Natural killer cell (primary cell): ENCODE measurements at regions of chr17 and their contacts with region 1.

Region 1: GRCh38 chr17:73231841-73232586 is 29.7 kb downstream of the CPSF4L start:
- DNase-seq: peak; percentile 97 to 98
- ATAC-seq: peak; percentile 96 to 98 (median 97)
- H3K4me3 ChIP-seq: peak overlapping the region; percentile 84
- H3K4me3 Mint-ChIP-seq: peak overlapping the region; percentile 98
- H3K27ac ChIP-seq: peak overlapping the region; percentile 48
- H3K27ac Mint-ChIP-seq: peak overlapping the region; percentile 94
- H3K4me1 ChIP-seq: peaks cover 21% of the 10 kb centered on the region
- H3K4me1 Mint-ChIP-seq: peaks cover 60 to 61% of the 10 kb centered on the region in 2 donors
- H3K27me3 ChIP-seq: no peaks in the 10 kb centered on the region
- H3K27me3 Mint-ChIP-seq: no peaks in the 10 kb centered on the region
- CTCF ChIP-seq: no peak

Region 2: GRCh38 chr17:73096866-73097265 is 135.1 kb before region 1 on chr17:
- intact Hi-C with region 1: loop called (anchors 5 kb)
- DNase-seq: no peak
- ATAC-seq: no peak
- H3K4me3 ChIP-seq: no peak overlapping the region
- H3K4me3 Mint-ChIP-seq: peak overlapping the region; percentile 59
- H3K27ac ChIP-seq: no peak overlapping the region
- H3K27ac Mint-ChIP-seq: peak overlapping the region in 1 of 2 donors; percentile 60
- H3K4me1 ChIP-seq: peaks cover 32% of the 10 kb centered on the region
- H3K4me1 Mint-ChIP-seq: peaks cover 14 to 38% of the 10 kb centered on the region in 2 donors
- H3K27me3 ChIP-seq: no peaks in the 10 kb centered on the region
- H3K27me3 Mint-ChIP-seq: peaks cover 21 to 22% of the 10 kb centered on the region in 2 donors
- CTCF ChIP-seq: no peak

Region 3: DNA sequence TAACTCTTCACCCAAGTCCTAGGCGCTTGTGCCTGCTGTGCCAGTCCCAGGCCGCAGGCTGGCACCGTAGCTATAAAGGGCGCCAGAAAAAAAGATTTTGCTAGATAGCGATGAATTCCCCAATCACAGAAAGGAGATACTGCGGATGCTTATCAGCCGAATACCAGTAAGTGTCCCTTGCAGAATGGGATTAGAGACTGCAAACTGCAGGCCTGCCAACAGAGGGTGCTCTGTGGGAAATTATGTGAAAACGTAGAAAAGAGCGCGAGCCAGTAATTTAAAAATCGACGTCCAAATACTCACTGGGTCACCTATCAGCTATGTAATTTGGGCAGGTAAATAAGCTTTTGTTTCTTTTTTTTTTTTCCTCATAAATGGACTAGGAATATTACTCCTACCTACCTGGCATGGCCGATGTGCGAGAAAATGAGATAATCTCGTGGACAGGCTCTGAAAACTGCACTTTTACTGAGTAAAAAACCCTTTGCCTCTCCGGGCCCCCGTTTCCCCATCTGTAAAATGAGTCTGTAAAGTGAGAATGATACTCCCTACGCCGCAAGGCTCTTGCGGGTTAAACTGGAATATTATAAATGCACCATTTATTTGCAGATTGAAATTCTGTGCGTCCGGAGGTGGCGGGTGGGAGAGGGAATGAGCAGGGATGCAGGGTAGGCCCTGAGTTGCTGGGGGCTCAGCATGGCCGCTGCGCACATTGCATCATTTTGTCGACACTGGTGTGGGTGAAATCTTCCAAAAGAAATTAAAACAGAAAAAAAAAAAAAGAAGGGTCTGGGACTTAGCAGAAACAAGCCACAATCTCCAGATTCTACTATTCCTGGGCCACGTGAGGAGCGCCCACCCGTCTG is 40.4 kb before region 1 on chr17:
- intact Hi-C with region 1: loop called (anchors 1 kb)
- DNase-seq: peak; percentile 53 to 84
- ATAC-seq: peak; percentile 41 to 59 (median 43)
- H3K4me3 ChIP-seq: peak overlapping the region; percentile 95
- H3K4me3 Mint-ChIP-seq: peak overlapping the region; percentile 85
- H3K27ac ChIP-seq: peak overlapping the region; percentile 82
- H3K27ac Mint-ChIP-seq: peak overlapping the region; percentile 59 to 93
- H3K4me1 ChIP-seq: peaks cover 19% of the 10 kb centered on the region
- H3K4me1 Mint-ChIP-seq: peaks cover 13 to 16% of the 10 kb centered on the region in 2 donors
- H3K27me3 ChIP-seq: no peaks in the 10 kb centered on the region
- H3K27me3 Mint-ChIP-seq: no peaks in the 10 kb centered on the region
- CTCF ChIP-seq: peak; percentile 73

Region 4: DNA sequence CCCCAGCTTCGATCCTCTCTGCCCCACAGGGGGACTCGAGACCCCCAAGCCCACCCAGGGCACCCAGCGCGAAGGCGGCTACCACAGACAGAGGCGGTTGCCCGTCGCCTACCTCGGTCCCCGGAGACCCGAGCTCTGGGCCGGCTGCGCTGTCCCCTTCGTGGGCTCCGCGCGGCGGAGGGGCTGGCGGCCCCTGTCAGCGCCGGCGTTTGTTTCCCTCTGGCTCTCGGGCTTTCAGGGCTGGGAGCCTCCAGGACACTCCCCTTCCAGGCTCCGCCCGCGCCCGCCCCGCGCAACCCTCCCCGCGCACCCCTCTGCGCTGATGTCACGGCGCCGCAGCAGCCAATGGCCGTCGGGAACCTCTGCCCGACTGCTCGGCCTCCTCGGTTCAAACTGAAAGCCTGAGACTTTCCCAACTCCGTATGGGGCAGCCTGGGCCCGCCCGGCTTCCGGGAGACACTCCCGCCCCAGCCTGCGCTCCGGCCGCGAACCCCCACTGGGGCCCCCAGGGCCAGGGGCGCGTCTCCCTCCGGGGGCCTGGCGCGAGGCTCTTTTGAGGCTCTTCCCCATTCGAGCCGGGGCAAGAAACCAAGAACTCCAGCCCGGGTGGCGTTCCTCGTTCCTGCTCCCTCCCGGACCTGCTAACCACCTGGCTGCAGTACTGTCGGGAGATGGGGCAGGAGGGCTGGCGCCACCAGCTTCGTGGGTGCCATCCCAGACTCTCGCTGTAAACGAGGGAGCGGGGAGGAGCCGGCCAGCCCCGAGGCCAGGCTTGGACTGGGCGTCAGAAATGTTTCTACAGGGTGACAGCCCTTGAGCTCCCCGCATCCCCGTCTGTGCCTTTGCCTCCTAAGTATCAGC is 80.0 kb after region 1 on chr17 and contains the start of gene CDC42EP4:
- intact Hi-C with region 1: loop called (anchors 2 kb)
- DNase-seq: peak; percentile 81 to 88
- ATAC-seq: peak; percentile 92 to 95 (median 94)
- H3K4me3 ChIP-seq: peak within 1 kb of the TSS; percentile 62
- H3K4me3 Mint-ChIP-seq: peak within 1 kb of the TSS; percentile 82
- H3K27ac ChIP-seq: peak within 1 kb of the TSS; percentile 44
- H3K27ac Mint-ChIP-seq: peak within 1 kb of the TSS in 1 of 2 donors; percentile 82
- H3K4me1 ChIP-seq: peaks cover 22% of the 10 kb centered on the region
- H3K4me1 Mint-ChIP-seq: peaks cover 7 to 15% of the 10 kb centered on the region in 2 donors
- H3K27me3 ChIP-seq: peaks cover 3% of the 10 kb centered on the region
- H3K27me3 Mint-ChIP-seq: peaks cover 0 to 3% of the 10 kb centered on the region in 2 donors
- CTCF ChIP-seq: no peak
- total RNA-seq, gene CDC42EP4: 2.5 to 9.6 (median 4.4) TPM

Region 5: DNA sequence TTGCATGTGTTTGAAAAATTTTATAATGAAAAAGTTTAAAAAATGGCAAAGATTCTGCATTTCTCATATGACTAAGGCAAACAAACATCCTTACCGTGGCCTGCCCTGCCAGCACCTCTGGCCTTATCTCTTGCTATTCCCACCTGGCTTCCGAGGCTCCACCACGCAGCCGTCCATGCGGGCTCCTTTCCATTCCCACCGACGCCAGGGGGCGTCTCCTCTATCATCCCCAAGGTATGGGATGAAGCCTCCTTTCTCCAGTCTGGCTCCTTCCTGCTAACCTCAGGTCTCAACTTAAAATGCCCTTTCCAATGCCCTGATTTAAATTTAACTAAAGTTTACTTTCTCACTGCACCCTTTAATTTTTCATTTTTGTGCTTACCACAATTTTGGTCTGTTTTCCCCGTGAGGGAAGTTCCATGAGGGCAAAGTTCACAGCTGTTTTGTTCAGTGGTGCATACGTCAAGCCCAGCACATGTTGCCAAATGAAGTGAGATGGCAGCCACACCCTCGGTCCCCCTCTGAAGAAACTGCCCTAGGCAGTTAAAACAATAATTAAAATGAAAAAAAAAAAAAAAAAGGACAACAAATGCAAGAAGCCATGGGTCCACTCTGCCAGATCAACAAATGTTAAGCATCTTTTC is 425.6 kb after region 1 on chr17:
- intact Hi-C with region 1: no loop called
- DNase-seq: peak in 1 of 2 donors; percentile 60
- ATAC-seq: peak in 2 of 3 donors; percentile 30 to 46
- H3K4me3 ChIP-seq: no peak overlapping the region
- H3K4me3 Mint-ChIP-seq: no peak overlapping the region
- H3K27ac ChIP-seq: no peak overlapping the region
- H3K27ac Mint-ChIP-seq: no peak overlapping the region
- H3K4me1 ChIP-seq: no peaks in the 10 kb centered on the region
- H3K4me1 Mint-ChIP-seq: peaks cover 0 to 6% of the 10 kb centered on the region in 2 donors
- H3K27me3 ChIP-seq: no peaks in the 10 kb centered on the region
- H3K27me3 Mint-ChIP-seq: peaks cover 16 to 29% of the 10 kb centered on the region in 2 donors
- CTCF ChIP-seq: peak; percentile 30